MCF 10A (cell line): ENCODE measurements at regions of chr5 and their contacts with region 1.

Region 1: GRCh38 chr5:160199410-160199911 is 29.8 kb upstream of the FABP6 start:
- DNase-seq: peak; percentile 66
- H3K4me3 Mint-ChIP-seq: peak overlapping the region; percentile 6
- H3K27ac Mint-ChIP-seq: no peak overlapping the region
- H3K4me1 Mint-ChIP-seq: peaks cover 5% of the 10 kb centered on the region
- H3K27me3 Mint-ChIP-seq: peaks cover 10% of the 10 kb centered on the region
- CTCF ChIP-seq: peak; percentile 100

Region 2: DNA sequence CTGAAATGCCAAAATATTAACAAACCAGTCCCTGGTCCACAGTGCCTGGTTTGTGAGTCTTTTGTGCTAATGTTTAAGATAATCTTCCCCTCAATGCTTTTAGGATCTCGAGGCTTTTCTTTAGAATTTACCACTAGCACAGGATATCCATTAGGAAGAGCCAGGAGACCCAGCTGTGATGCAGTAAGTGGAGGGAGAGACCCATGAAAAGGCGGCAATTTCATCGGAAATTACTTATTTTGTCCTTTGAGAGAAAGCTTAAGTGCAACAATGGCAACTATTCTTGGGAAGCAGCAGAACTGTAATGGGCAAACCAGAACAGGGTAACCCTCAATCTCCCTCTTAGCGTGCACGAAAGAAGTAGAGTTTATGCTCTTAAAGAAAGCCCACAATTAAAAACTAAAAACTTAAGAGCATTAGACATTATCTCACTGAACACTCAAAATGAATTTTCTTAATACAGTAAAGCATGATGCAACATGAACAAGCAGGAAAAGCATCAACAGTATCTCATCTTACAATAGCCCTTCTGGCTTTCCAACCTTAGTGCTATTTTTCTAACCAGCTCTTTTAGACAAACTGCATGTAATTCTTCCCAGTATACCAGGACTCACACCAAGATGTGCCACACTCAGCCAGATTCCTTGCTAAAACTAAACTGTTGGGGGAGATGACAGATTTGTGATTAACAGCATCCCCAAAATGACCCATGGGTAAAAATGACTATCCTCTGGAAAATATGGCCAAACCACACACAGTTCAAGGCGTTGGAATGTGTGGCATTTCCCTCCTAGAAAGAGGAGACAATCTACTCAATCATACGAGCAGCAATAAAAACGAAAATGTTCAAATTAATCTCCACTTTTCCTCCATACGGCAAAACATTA is 116.6 kb before region 1 on chr5:
- CTCF ChIA-PET with region 1: no interaction called
- POLR2A ChIA-PET with region 1: no interaction called
- intact Hi-C with region 1: loop called (anchors 2 kb)
- DNase-seq: peak; percentile 61
- H3K4me3 Mint-ChIP-seq: no peak overlapping the region
- H3K27ac Mint-ChIP-seq: no peak overlapping the region
- H3K4me1 Mint-ChIP-seq: peaks cover 17% of the 10 kb centered on the region
- H3K27me3 Mint-ChIP-seq: no peaks in the 10 kb centered on the region
- CTCF ChIP-seq: no peak

Region 3: GRCh38 chr5:160213537-160213936 is 14.1 kb after region 1 on chr5:
- CTCF ChIA-PET with region 1: interaction called, 41 read pairs
- POLR2A ChIA-PET with region 1: no interaction called
- intact Hi-C with region 1: no loop called
- DNase-seq: peak; percentile 22
- H3K4me3 Mint-ChIP-seq: no peak overlapping the region
- H3K27ac Mint-ChIP-seq: no peak overlapping the region
- H3K4me1 Mint-ChIP-seq: no peaks in the 10 kb centered on the region
- H3K27me3 Mint-ChIP-seq: no peaks in the 10 kb centered on the region
- CTCF ChIP-seq: no peak

Region 4: DNA sequence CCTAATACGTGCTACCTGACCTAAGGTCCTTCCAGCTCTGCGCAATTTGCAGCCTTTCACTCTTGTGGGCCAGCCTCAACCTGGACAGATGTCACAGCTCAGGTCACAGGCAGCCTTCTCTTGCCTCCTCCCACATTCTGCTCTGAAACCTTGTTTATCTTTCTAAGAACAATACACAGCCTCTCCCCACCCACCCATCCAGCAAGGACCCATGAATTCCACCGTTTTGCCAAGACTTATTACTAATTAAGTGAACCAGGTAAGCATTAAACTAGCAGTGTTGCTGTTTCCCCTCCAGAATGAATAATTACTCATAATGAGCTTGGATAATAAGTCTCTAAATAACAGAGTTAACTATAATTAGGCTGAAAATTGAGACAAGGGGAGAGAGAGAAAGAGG is 40.9 kb after region 1 on chr5:
- CTCF ChIA-PET with region 1: interaction called, 9 read pairs
- POLR2A ChIA-PET with region 1: interaction called, 3 read pairs
- intact Hi-C with region 1: loop called (anchors 5 kb)
- DNase-seq: no peak
- H3K4me3 Mint-ChIP-seq: no peak overlapping the region
- H3K27ac Mint-ChIP-seq: no peak overlapping the region
- H3K4me1 Mint-ChIP-seq: no peaks in the 10 kb centered on the region
- H3K27me3 Mint-ChIP-seq: peaks cover 18% of the 10 kb centered on the region
- CTCF ChIP-seq: no peak

Region 5: GRCh38 chr5:160298189-160298588 is 98.7 kb after region 1 on chr5:
- CTCF ChIA-PET with region 1: no interaction called
- POLR2A ChIA-PET with region 1: no interaction called
- intact Hi-C with region 1: no loop called
- DNase-seq: no peak
- H3K4me3 Mint-ChIP-seq: no peak overlapping the region
- H3K27ac Mint-ChIP-seq: no peak overlapping the region
- H3K4me1 Mint-ChIP-seq: peaks cover 7% of the 10 kb centered on the region
- H3K27me3 Mint-ChIP-seq: no peaks in the 10 kb centered on the region
- CTCF ChIP-seq: no peak

Region 6: GRCh38 chr5:160390787-160391696 is 191.6 kb after region 1 on chr5:
- CTCF ChIA-PET with region 1: interaction called, 12 read pairs
- POLR2A ChIA-PET with region 1: no interaction called
- intact Hi-C with region 1: loop called (anchors 1 kb)
- DNase-seq: peak; percentile 47
- H3K4me3 Mint-ChIP-seq: no peak overlapping the region
- H3K27ac Mint-ChIP-seq: no peak overlapping the region
- H3K4me1 Mint-ChIP-seq: no peaks in the 10 kb centered on the region
- H3K27me3 Mint-ChIP-seq: no peaks in the 10 kb centered on the region
- CTCF ChIP-seq: peak; percentile 64